ENCODE measurements at regions of chr6 and their contacts with region 1.

Region 1: GRCh38 chr6:104843200-104843599 is 16.5 kb downstream of the HACE1 start:
- DNase-seq: no peak
- ATAC-seq: no peak
- H3K4me3 ChIP-seq: no peak overlapping the region
- H3K27ac ChIP-seq: no peak overlapping the region
- H3K4me1 ChIP-seq: peaks cover 0 to 3% (median 0%) of the 10 kb centered on the region in 12 donors
- H3K27me3 ChIP-seq: no peaks in the 10 kb centered on the region
- CTCF ChIP-seq: no peak
- POLR2A ChIP-seq: no peak

Region 2: GRCh38 chr6:104859225-104860146 is 16.3 kb after region 1 on chr6 and contains the start of gene HACE1:
- intact Hi-C with region 1: loop called in 1 of 10 experiments (anchors 1 kb)
- DNase-seq: peak; percentile 91 to 94 (median 93)
- ATAC-seq: peak; percentile 98 to 100 (median 100)
- H3K4me3 ChIP-seq: peak within 1 kb of the TSS; percentile 68 to 98 (median 89)
- H3K27ac ChIP-seq: peak within 1 kb of the TSS; percentile 22 to 86 (median 78)
- H3K4me1 ChIP-seq: peaks cover 0 to 12% (median 9%) of the 10 kb centered on the region in 12 donors
- H3K27me3 ChIP-seq: no peaks in the 10 kb centered on the region
- CTCF ChIP-seq: peak in 7 of 12 donors; percentile 13 to 53 (median 33)
- POLR2A ChIP-seq: peak in 1 of 2 donors; percentile 70
- total RNA-seq, gene HACE1: 6.3 to 8.6 (median 7.0) TPM